KBM-7 (cell line): ENCODE measurements at regions of chrX and their contacts with region 1.

Region 1: DNA sequence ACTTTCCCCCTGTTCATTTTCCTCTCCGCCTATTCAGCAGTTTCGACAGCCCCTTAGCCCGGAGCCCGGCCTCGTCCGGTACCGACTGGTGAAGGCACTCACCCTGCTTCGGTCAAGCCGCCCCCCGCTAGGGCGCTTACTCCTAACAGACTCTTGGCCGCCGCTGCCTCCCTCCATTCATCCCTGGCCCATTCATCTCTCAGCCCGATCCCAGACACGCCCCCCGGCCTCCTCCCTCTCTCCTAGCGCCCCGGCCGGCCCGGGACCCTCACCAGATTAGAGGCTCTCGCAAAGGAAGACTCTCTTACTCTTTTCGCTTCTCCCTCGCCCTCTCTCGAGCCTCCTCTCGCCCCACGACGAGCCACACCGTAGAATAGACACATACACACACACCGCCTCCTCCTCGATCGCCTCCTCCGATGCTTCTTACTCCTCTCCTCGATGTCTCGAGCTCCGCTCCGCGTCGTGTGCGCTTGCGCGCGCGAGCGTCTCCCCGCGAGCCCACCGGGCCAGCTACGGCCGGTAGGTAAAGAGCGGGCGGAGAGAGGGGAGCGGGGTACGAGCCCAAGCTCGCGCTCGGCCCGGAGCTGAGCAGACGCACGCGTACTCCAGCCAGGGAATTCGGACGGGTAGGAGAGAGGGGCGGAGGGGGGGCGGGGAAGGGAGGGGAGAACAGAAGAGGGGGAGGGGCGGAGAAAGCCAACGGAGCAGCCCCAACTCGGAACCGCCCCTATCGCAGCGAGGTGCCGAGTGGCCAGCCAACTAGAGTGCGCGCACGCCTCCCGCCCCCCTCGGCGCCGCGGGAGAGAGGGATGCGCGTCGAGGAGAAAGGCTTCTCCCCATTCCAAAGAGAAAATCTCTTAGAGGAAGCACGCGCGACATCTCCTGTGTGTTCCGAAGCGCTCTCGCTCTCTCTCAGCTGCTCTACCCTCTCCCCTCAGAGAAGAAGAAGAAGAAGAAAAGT is at the start of gene WNK3:
- DNase-seq: peak; percentile 26

Region 2: GRCh38 chrX:54182864-54183608 is 174.7 kb before region 1 on chrX and contains the start of gene FAM120C:
- in situ Hi-C with region 1: no loop called
- DNase-seq: peak; percentile 92

Region 3: GRCh38 chrX:54452920-54453319 is 95.2 kb after region 1 on chrX:
- in situ Hi-C with region 1: loop called (anchors 25 kb)
- DNase-seq: peak; percentile 44